Prostate gland (tissue), 2 donors: ENCODE measurements at regions of chr2 and their contacts with region 1.

Region 1: GRCh38 chr2:124542932-124543640 is 518.0 kb downstream of the CNTNAP5 start:
- DNase-seq: no peak
- H3K4me3 ChIP-seq: no peak overlapping the region
- H3K27ac ChIP-seq: no peak overlapping the region
- H3K4me1 ChIP-seq: no peaks in the 10 kb centered on the region
- H3K27me3 ChIP-seq: no peaks in the 10 kb centered on the region
- CTCF ChIP-seq: no peak
- POLR2A ChIP-seq: no peak

Region 2: DNA sequence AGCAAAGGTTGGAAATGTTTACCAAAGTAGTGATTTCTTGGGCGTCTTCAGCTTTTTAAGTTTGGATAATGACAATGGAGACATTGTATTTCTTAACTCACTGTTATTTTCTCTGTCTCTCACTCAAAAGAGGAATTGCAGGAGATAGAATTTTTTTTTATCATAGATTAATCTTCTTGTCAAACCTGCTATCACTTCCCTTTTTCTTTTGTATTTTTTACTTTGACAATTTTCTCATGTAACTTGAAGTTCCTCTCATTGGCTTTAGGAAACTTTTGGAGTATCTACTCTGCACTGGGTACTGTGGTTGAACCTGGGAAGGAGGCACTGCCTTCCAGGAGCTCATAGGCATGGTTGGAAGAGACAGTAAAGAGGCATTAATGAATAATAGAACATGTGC is 28.9 kb before region 1 on chr2:
- intact Hi-C with region 1: no loop called
- DNase-seq: no peak
- H3K4me3 ChIP-seq: no peak overlapping the region
- H3K27ac ChIP-seq: no peak overlapping the region
- H3K4me1 ChIP-seq: no peaks in the 10 kb centered on the region
- H3K27me3 ChIP-seq: no peaks in the 10 kb centered on the region
- CTCF ChIP-seq: no peak
- POLR2A ChIP-seq: no peak

Region 3: GRCh38 chr2:124692707-124693106 is 149.6 kb after region 1 on chr2:
- intact Hi-C with region 1: loop called (anchors 5 kb)
- DNase-seq: no peak
- H3K4me3 ChIP-seq: no peak overlapping the region
- H3K27ac ChIP-seq: no peak overlapping the region
- H3K4me1 ChIP-seq: no peaks in the 10 kb centered on the region
- H3K27me3 ChIP-seq: no peaks in the 10 kb centered on the region
- CTCF ChIP-seq: no peak
- POLR2A ChIP-seq: no peak

Region 4: GRCh38 chr2:124713969-124714368 is 170.9 kb after region 1 on chr2:
- intact Hi-C with region 1: no loop called
- DNase-seq: no peak
- H3K4me3 ChIP-seq: no peak overlapping the region
- H3K27ac ChIP-seq: no peak overlapping the region
- H3K4me1 ChIP-seq: no peaks in the 10 kb centered on the region
- H3K27me3 ChIP-seq: no peaks in the 10 kb centered on the region
- CTCF ChIP-seq: no peak
- POLR2A ChIP-seq: no peak